GM12878 (cell line): ENCODE measurements at regions of chr13 and their contacts with region 1.

Region 1: GRCh38 chr13:30142486-30143211 is 164.7 kb downstream of the KATNAL1 start:
- DNase-seq: no peak
- ATAC-seq: peak; percentile 46
- H3K4me3 ChIP-seq: no peak overlapping the region
- H3K27ac ChIP-seq: peak overlapping the region; percentile 0; the same call in 1 of the 2 replicates
- H3K4me1 ChIP-seq: peaks cover 60% of the 10 kb centered on the region
- H3K27me3 ChIP-seq: no peaks in the 10 kb centered on the region
- CTCF ChIP-seq: no peak
- EP300 ChIP-seq: no peak
- POLR2A ChIP-seq: no peak
- RAD21 ChIP-seq: no peak

Region 2: DNA sequence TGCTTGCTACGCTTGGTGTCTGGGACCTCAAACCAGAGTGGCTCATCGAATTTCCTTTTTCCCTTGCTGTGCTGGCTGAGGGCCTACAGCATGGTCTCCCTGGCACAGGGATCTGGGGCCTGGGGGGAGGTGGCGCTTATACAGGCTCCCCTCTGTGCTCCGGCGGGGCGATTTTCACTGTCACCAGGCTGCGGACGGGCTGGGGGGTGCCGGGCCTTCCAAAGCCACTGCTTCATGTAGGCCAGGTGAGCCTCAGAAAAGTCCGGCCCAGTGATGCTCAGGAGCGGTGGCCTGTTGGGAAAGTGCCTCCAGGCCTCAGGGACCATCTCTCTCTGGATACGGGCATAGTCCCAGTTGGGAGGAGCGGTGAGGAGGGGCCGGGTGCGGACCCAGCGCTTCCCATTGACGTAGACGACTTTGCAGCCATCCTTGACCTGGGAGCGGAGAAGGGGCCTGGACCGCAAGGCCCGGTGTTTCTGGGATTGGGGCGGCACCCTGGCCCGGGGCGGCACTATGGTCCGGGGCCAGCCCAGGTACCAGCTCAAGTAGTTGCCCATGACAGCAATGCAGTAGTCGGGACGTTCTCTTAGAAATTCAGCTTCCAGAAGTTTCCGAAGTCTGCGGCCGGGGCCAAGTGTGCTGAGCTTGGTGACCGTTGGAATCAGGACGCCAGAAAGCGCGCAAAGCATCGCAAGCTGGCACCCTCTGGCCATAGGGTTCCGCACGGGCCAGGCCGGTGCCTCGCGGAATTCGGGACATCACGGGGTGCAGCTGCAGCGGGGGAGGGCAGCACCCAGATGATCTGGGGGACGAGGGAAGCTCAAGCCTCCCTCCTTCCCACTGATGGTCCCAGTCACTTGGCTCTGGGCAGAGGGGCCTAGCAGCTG is 803.0 kb before region 1 on chr13:
- CTCF ChIA-PET with region 1: no interaction called
- POLR2A ChIA-PET with region 1: no interaction called
- RAD21 ChIA-PET with region 1: no interaction called
- SMC1A ChIA-PET with region 1: no interaction called
- in situ Hi-C with region 1: no loop called
- intact Hi-C with region 1: no loop called
- DNase-seq: no peak
- ATAC-seq: no peak
- H3K4me3 ChIP-seq: no peak overlapping the region
- H3K27ac ChIP-seq: no peak overlapping the region
- H3K4me1 ChIP-seq: no peaks in the 10 kb centered on the region
- H3K27me3 ChIP-seq: no peaks in the 10 kb centered on the region
- CTCF ChIP-seq: no peak
- EP300 ChIP-seq: no peak
- POLR2A ChIP-seq: no peak
- RAD21 ChIP-seq: no peak

Region 3: DNA sequence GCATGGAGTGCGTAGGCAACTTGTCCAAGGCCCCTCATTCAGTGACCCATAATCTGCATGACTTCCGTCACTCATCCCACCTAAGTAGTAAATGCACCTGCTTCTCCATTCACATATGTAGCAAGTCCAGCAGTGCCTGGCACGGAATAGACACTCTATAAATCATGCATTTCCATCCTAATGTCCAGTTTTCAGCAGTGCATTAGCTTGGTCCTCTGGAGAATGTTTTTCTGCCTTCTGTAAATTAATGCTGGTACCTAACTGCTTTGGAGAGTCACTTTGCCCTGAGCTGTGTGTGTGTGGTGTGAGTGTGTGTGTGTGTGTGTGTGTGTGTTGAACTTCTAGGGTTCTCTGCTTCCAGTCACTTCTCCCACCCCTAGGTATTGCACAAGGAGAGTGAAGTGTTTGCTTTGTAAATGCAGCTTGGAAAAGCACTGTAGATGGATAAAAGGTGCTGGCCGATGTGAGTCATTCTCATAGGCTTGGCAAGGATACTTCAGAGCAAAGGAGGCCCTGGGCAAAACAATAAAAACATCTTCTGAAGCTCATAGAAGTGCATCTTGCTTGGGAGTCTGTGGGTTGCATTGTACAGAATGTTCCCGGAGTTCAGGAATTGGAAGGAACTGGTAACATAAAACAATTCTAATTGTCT is 17.1 kb before region 1 on chr13:
- CTCF ChIA-PET with region 1: interaction called, 92 read pairs
- POLR2A ChIA-PET with region 1: interaction called, 4 read pairs
- RAD21 ChIA-PET with region 1: interaction called, 33 read pairs
- SMC1A ChIA-PET with region 1: interaction called, 6 read pairs
- in situ Hi-C with region 1: no loop called
- intact Hi-C with region 1: no loop called
- DNase-seq: no peak
- ATAC-seq: no peak
- H3K4me3 ChIP-seq: no peak overlapping the region
- H3K27ac ChIP-seq: no peak overlapping the region
- H3K4me1 ChIP-seq: no peaks in the 10 kb centered on the region
- H3K27me3 ChIP-seq: no peaks in the 10 kb centered on the region
- CTCF ChIP-seq: no peak
- EP300 ChIP-seq: no peak
- POLR2A ChIP-seq: no peak
- RAD21 ChIP-seq: no peak

Region 4: DNA sequence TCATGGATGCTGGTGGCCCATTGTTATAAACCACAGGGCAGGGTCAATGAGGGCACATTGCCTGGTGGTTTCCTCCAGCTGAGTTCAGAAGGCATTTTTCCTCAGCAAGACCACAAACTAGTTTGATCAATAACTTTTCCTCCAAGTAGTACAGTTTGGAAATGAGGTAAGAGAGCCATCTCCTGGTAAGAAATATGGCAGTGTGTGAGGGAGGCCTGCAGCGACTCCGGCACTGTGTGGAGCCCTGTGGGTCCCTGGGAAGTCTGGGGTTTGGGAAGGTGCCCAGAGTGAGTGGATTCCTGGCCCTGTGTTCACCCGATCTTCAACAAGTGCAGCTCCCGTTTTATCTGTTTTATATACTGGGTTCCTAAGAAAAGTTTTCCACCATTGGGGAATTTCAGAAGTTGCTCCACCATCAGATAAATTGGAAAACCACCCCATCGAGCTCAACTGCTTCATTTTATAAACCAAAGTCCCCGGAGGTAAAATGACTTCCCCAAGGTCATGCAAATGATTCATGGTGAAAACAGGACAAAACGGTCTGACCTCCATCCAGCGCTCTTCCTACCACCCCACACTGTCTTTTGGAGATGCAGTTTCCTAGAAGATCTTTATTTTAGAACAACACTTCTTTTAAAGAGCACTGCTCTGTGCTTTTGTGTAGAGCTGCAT is 16.3 kb after region 1 on chr13:
- CTCF ChIA-PET with region 1: interaction called, 44 read pairs
- POLR2A ChIA-PET with region 1: interaction called, 21 read pairs
- RAD21 ChIA-PET with region 1: interaction called, 45 read pairs
- SMC1A ChIA-PET with region 1: interaction called, 91 read pairs
- in situ Hi-C with region 1: no loop called
- intact Hi-C with region 1: loop called (anchors 1 kb)
- DNase-seq: no peak
- ATAC-seq: peak; percentile 61
- H3K4me3 ChIP-seq: no peak overlapping the region
- H3K27ac ChIP-seq: 0 out of 2 replicates have a peak overlapping the region, but pooled peaks have one; percentile 1
- H3K4me1 ChIP-seq: peaks cover 33% of the 10 kb centered on the region
- H3K27me3 ChIP-seq: no peaks in the 10 kb centered on the region
- CTCF ChIP-seq: peak in 2 of 3 experiments; percentile 33 to 40; a peak in 4 of 6 replicates
- EP300 ChIP-seq: no peak
- POLR2A ChIP-seq: no peak
- RAD21 ChIP-seq: peak; percentile 68

Region 5: GRCh38 chr13:30241532-30241931 is 98.9 kb after region 1 on chr13:
- CTCF ChIA-PET with region 1: no interaction called
- POLR2A ChIA-PET with region 1: no interaction called
- RAD21 ChIA-PET with region 1: no interaction called
- SMC1A ChIA-PET with region 1: no interaction called
- in situ Hi-C with region 1: no loop called
- intact Hi-C with region 1: loop called (anchors 5 kb)
- DNase-seq: peak; percentile 56
- ATAC-seq: peak; percentile 93
- H3K4me3 ChIP-seq: no peak overlapping the region
- H3K27ac ChIP-seq: no peak overlapping the region
- H3K4me1 ChIP-seq: peaks cover 2% of the 10 kb centered on the region; the same call in 1 of the 2 replicates
- H3K27me3 ChIP-seq: no peaks in the 10 kb centered on the region
- CTCF ChIP-seq: no peak
- EP300 ChIP-seq: peak in 1 of 2 experiments; percentile 60; a peak in 1 of 4 replicates
- POLR2A ChIP-seq: no peak
- RAD21 ChIP-seq: no peak; the same call in 1 of the 2 replicates

Region 6: GRCh38 chr13:30334663-30335386 is 192.2 kb after region 1 on chr13:
- CTCF ChIA-PET with region 1: interaction called, 3 read pairs
- POLR2A ChIA-PET with region 1: no interaction called
- RAD21 ChIA-PET with region 1: interaction called, 3 read pairs
- SMC1A ChIA-PET with region 1: interaction called, 4 read pairs
- in situ Hi-C with region 1: loop called (anchors 5 kb)
- intact Hi-C with region 1: no loop called
- DNase-seq: no peak
- ATAC-seq: peak; percentile 85
- H3K4me3 ChIP-seq: no peak overlapping the region
- H3K27ac ChIP-seq: no peak overlapping the region
- H3K4me1 ChIP-seq: no peaks in the 10 kb centered on the region
- H3K27me3 ChIP-seq: no peaks in the 10 kb centered on the region
- CTCF ChIP-seq: peak; percentile 52 to 59 (median 58); a peak in 5 of 6 replicates
- EP300 ChIP-seq: no peak
- POLR2A ChIP-seq: no peak
- RAD21 ChIP-seq: peak; percentile 68